CD4-positive, alpha-beta memory T cell (primary cell): ENCODE measurements at regions of chr17 and their contacts with region 1.

Region 1: DNA sequence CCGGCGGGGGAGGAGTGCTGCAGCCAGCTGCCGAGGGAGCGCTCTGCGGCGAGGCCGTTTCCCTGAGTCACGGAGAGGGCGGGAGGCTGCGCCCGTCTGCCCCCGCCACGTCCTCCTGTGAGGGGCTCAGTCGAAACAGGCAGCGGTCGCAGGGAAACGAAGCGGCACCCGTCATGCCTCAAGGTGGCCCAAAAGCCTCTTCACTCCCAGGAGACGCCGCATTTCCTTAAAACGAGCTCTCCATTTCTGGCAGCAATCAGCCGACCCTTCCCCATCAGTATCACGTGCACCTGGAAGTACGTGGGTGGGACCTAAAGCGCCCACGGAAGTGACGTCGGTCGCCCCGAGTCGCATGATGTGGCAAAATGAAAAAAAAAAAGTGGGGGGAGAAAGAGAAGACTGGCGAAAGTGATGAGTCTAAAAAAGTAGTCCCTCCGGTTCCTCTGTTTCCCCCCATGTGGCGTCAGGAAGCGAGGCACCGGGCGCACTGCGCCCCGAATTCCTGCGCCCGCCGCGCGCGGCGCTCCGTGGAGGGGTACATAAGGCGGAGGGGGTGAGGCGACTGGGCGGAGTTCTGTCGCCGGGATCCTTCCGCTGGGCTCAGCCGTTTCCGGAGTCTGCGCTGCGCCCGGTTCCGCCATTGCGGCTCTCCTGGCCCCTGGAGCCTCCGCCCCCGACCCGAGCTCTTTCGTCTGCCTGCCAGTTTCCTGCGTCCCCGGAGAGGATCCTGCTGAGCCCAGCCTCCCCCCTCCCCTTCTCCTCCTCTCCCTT is at the start of gene CLTC:
- DNase-seq: peak; percentile 95 to 97 (median 96)
- H3K4me3 ChIP-seq: peak within 1 kb of the TSS; percentile 89 to 98
- H3K4me3 Mint-ChIP-seq: peak within 1 kb of the TSS; percentile 92 to 99 (median 97)
- H3K27ac ChIP-seq: peak within 1 kb of the TSS; percentile 96
- H3K27ac Mint-ChIP-seq: peak within 1 kb of the TSS; percentile 97 to 99 (median 99)
- H3K4me1 ChIP-seq: peaks cover 49% of the 10 kb centered on the region
- H3K4me1 Mint-ChIP-seq: peaks cover 28 to 69% (median 44%) of the 10 kb centered on the region in 4 donors
- H3K27me3 ChIP-seq: no peaks in the 10 kb centered on the region
- H3K27me3 Mint-ChIP-seq: no peaks in the 10 kb centered on the region
- total RNA-seq, gene CLTC: 115 to 118 TPM

Region 2: GRCh38 chr17:59634632-59635541 is 15.4 kb after region 1 on chr17:
- CTCF ChIA-PET with region 1: interaction called, 4 read pairs
- POLR2A ChIA-PET with region 1: interaction called, 21 read pairs
- intact Hi-C with region 1: no loop called
- DNase-seq: peak in 1 of 5 donors; percentile 6
- H3K4me3 ChIP-seq: no peak overlapping the region
- H3K4me3 Mint-ChIP-seq: peak overlapping the region in 7 of 8 donors; percentile 17 to 73 (median 51)
- H3K27ac ChIP-seq: no peak overlapping the region
- H3K27ac Mint-ChIP-seq: peak overlapping the region in 6 of 7 donors; percentile 35 to 74 (median 58)
- H3K4me1 ChIP-seq: peaks cover 86% of the 10 kb centered on the region
- H3K4me1 Mint-ChIP-seq: peaks cover 46 to 81% (median 65%) of the 10 kb centered on the region in 4 donors
- H3K27me3 ChIP-seq: no peaks in the 10 kb centered on the region
- H3K27me3 Mint-ChIP-seq: no peaks in the 10 kb centered on the region

Region 3: GRCh38 chr17:59651346-59651745 is 31.9 kb after region 1 on chr17:
- CTCF ChIA-PET with region 1: no interaction called
- POLR2A ChIA-PET with region 1: interaction called, 12 read pairs
- intact Hi-C with region 1: no loop called
- DNase-seq: peak in 4 of 5 donors; percentile 13 to 29 (median 21)
- H3K4me3 ChIP-seq: no peak overlapping the region
- H3K4me3 Mint-ChIP-seq: peak overlapping the region in 1 of 8 donors; percentile 0
- H3K27ac ChIP-seq: no peak overlapping the region
- H3K27ac Mint-ChIP-seq: peak overlapping the region in 1 of 7 donors; percentile 56
- H3K4me1 ChIP-seq: peaks cover 16% of the 10 kb centered on the region
- H3K4me1 Mint-ChIP-seq: peaks cover 29 to 52% (median 36%) of the 10 kb centered on the region in 4 donors
- H3K27me3 ChIP-seq: no peaks in the 10 kb centered on the region
- H3K27me3 Mint-ChIP-seq: no peaks in the 10 kb centered on the region

Region 4: DNA sequence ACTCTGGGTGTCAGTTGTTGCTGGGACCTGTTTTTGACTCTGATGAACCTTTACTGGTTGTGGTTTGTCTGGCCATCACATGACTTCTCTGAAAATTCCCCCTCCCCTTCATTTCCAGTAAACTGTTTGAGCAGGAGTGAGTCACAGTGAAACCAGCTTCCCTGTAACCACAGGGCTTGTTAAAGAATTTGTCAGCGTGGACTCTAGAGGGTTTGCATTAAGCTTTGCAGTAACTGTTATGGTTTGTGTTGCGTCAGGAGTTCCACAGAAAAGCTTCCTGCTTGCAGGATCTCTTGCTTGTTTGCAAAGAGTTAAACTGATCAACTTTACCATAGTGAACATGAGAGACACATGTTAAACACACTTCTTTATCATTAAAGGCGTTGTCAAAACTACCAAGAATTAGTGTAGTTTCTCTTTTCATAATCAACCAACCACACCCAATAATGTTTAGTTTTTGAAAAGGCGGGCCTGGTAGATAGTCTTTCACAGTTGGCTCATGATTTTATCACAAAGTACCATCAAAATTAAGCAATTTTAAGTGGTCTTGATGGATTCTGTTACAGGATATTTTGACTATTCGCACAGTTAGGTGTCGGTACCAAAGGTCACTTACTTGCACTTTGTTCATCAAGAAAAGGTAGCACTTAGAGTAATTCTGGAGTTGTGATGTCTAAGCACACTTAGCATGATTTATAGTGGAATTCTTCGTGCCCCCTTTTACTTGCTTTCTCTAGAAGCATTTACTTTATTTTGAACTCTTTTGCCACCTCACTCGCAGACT is 167.2 kb after region 1 on chr17:
- CTCF ChIA-PET with region 1: no interaction called
- POLR2A ChIA-PET with region 1: interaction called, 11 read pairs
- intact Hi-C with region 1: no loop called
- DNase-seq: peak; percentile 86 to 96 (median 91)
- H3K4me3 ChIP-seq: peak overlapping the region; percentile 18 to 51
- H3K4me3 Mint-ChIP-seq: peak overlapping the region; percentile 72 to 89 (median 87)
- H3K27ac ChIP-seq: peak overlapping the region; percentile 87
- H3K27ac Mint-ChIP-seq: peak overlapping the region; percentile 94 to 100 (median 99)
- H3K4me1 ChIP-seq: peaks cover 78% of the 10 kb centered on the region
- H3K4me1 Mint-ChIP-seq: peaks cover 38 to 64% (median 50%) of the 10 kb centered on the region in 4 donors
- H3K27me3 ChIP-seq: no peaks in the 10 kb centered on the region
- H3K27me3 Mint-ChIP-seq: no peaks in the 10 kb centered on the region